Aorta (tissue), 5 donors: ENCODE measurements at regions of chr21 and their contacts with region 1.

Region 1: DNA sequence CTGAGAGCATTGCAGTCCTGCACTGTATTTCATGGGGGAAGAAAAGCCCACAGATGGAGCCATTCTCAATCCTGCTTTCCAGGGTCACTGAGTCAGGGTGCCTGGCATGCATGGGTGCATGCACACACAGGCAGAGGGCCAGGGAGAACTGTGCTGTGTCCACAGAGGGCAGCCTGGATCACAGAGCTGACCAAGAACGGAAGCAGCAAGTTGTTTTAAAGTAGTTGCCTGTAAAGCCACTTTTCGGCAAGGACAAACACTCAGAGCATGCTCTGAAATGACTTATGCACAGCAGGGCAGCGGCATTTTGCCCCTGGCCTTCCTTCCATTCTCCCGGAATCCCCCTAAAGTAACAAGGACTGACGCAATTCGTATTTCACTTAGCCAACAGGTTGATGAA is 3.6 kb downstream of the ERG start:
- DNase-seq: peak; percentile 80 to 89
- ATAC-seq: peak; percentile 68
- H3K4me3 ChIP-seq: no peak overlapping the region
- H3K27ac ChIP-seq: peak overlapping the region; percentile 41 to 49
- H3K4me1 ChIP-seq: peaks cover 9 to 10% of the 10 kb centered on the region in 2 donors
- H3K27me3 ChIP-seq: no peaks in the 10 kb centered on the region

Region 2: DNA sequence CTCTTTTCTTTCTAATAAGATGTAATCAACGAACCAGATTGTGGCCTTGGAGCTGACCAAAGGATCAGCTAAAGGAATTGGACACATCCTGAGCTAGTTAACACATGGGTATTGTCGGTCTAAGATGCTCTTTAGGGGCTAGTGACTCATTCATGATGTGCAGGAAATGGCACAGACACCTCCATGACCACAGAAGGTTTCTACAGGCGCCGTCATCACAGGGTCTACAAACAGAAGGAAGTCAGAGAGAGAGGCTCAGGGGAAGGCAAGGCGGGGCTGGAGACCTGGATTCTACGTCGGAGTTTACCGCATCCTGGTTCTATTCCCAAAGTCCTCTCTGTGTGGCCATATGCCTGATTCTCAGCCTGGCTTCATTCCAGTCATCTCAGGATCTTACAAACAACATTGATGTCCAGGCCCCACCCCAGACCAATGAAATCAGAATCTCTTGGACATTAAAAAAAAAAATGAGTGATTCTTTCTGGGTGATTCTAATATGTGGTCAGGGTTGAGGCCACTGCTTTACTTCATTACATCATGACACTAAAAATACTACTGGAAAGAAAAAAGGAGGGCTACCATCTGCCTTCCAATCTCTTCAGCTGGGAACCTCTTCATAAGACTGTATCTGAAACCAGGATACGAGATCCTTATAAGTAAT is 249.7 kb before region 1 on chr21:
- intact Hi-C with region 1: loop called in 1 of 2 experiments (anchors 10 kb)
- DNase-seq: no peak
- ATAC-seq: no peak
- H3K4me3 ChIP-seq: no peak overlapping the region
- H3K27ac ChIP-seq: no peak overlapping the region
- H3K4me1 ChIP-seq: peaks cover 0 to 3% of the 10 kb centered on the region in 2 donors
- H3K27me3 ChIP-seq: no peaks in the 10 kb centered on the region

Region 3: GRCh38 chr21:38333301-38334272 is 161.1 kb before region 1 on chr21:
- intact Hi-C with region 1: no loop called
- DNase-seq: no peak
- ATAC-seq: peak; percentile 52
- H3K4me3 ChIP-seq: no peak overlapping the region
- H3K27ac ChIP-seq: no peak overlapping the region
- H3K4me1 ChIP-seq: no peaks in the 10 kb centered on the region
- H3K27me3 ChIP-seq: no peaks in the 10 kb centered on the region

Region 4: DNA sequence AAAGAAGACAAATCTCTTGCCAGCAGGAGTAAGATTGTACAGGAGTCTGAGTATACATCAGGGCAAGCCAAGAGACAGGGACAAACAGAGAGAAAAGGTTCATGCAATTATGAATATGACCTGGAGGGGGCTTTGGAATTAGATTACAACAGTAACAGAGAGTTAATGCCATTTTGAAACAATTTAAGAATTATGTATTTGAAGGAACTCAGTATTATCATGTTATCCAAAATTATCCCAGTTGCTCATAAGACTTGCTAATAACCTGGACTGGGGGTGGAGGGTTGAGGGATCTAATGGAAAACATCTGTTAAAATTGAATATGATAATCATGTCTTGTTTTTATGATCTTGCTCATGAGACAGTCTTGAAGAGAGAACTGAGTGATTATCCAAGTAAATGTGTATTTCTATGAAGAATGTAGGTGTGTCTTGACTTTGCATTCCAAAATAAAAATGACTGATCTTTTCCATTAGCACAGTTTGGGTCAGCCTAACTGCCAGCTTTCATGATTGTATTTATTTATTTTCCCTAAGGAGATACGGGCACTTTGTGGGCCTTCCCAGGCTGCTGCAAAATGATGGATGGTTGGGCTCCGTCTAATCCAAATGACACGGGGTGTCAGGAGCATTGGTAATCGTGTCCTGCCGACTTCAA is 114.1 kb before region 1 on chr21:
- intact Hi-C with region 1: loop called in 1 of 2 experiments (anchors 5 kb)
- DNase-seq: peak in 1 of 2 donors; percentile 56
- ATAC-seq: no peak
- H3K4me3 ChIP-seq: no peak overlapping the region
- H3K27ac ChIP-seq: peak overlapping the region; percentile 85 to 94
- H3K4me1 ChIP-seq: peaks cover 0 to 3% of the 10 kb centered on the region in 2 donors
- H3K27me3 ChIP-seq: no peaks in the 10 kb centered on the region

Region 5: GRCh38 chr21:38438476-38438893 is 56.2 kb before region 1 on chr21:
- intact Hi-C with region 1: loop called in 1 of 2 experiments (anchors 10 kb)
- DNase-seq: peak; percentile 82 to 90
- ATAC-seq: no peak
- H3K4me3 ChIP-seq: no peak overlapping the region
- H3K27ac ChIP-seq: no peak overlapping the region
- H3K4me1 ChIP-seq: peaks cover 2% of the 10 kb centered on the region in 2 donors
- H3K27me3 ChIP-seq: no peaks in the 10 kb centered on the region

Region 6: GRCh38 chr21:38460171-38460742 is 34.4 kb before region 1 on chr21:
- intact Hi-C with region 1: loop called (anchors 5 kb)
- DNase-seq: peak in 1 of 2 donors; percentile 72
- ATAC-seq: peak; percentile 79
- H3K4me3 ChIP-seq: no peak overlapping the region
- H3K27ac ChIP-seq: peak overlapping the region; percentile 84 to 98
- H3K4me1 ChIP-seq: peaks cover 0 to 19% of the 10 kb centered on the region in 2 donors
- H3K27me3 ChIP-seq: no peaks in the 10 kb centered on the region